ENCODE measurements at regions of chr17 and their contacts with region 1.

Region 1: GRCh38 chr17:58200017-58200633 is 7.6 kb downstream of the EPX start:
- DNase-seq: peak; percentile 64
- ATAC-seq: peak; percentile 70
- H3K4me3 ChIP-seq: no peak overlapping the region
- H3K4me3 Mint-ChIP-seq: no peak overlapping the region
- H3K27ac ChIP-seq: no peak overlapping the region
- H3K27ac Mint-ChIP-seq: no peak overlapping the region
- H3K4me1 ChIP-seq: peaks cover 0 to 5% of the 10 kb centered on the region in 2 donors
- H3K4me1 Mint-ChIP-seq: peaks cover 3% of the 10 kb centered on the region
- H3K27me3 ChIP-seq: peaks cover 0 to 2% (median 0%) of the 10 kb centered on the region in 4 experiments
- H3K27me3 Mint-ChIP-seq: peaks cover 33% of the 10 kb centered on the region
- CTCF ChIP-seq: peak; percentile 77

Region 2: GRCh38 chr17:58210922-58211321 is 10.8 kb after region 1 on chr17:
- CTCF ChIA-PET with region 1: interaction called, 14 read pairs
- POLR2A ChIA-PET with region 1: no interaction called
- intact Hi-C with region 1: no loop called
- DNase-seq: no peak
- ATAC-seq: no peak
- H3K4me3 ChIP-seq: no peak overlapping the region
- H3K4me3 Mint-ChIP-seq: no peak overlapping the region
- H3K27ac ChIP-seq: no peak overlapping the region
- H3K27ac Mint-ChIP-seq: no peak overlapping the region
- H3K4me1 ChIP-seq: no peaks in the 10 kb centered on the region
- H3K4me1 Mint-ChIP-seq: peaks cover 1% of the 10 kb centered on the region
- H3K27me3 ChIP-seq: no peaks in the 10 kb centered on the region
- H3K27me3 Mint-ChIP-seq: no peaks in the 10 kb centered on the region
- CTCF ChIP-seq: no peak

Region 3: GRCh38 chr17:58219001-58219788 is 19.1 kb after region 1 on chr17 and contains the start of gene MKS1:
- CTCF ChIA-PET with region 1: interaction called, 14 read pairs
- POLR2A ChIA-PET with region 1: no interaction called
- intact Hi-C with region 1: no loop called
- DNase-seq: peak; percentile 95
- ATAC-seq: peak; percentile 97
- H3K4me3 ChIP-seq: peak within 1 kb of the TSS; percentile 38 to 84 (median 68)
- H3K4me3 Mint-ChIP-seq: peak within 1 kb of the TSS; percentile 94
- H3K27ac ChIP-seq: peak within 1 kb of the TSS; percentile 70 to 86
- H3K27ac Mint-ChIP-seq: peak within 1 kb of the TSS; percentile 83
- H3K4me1 ChIP-seq: peaks cover 10 to 19% of the 10 kb centered on the region in 2 donors
- H3K4me1 Mint-ChIP-seq: peaks cover 34% of the 10 kb centered on the region
- H3K27me3 ChIP-seq: no peaks in the 10 kb centered on the region
- H3K27me3 Mint-ChIP-seq: peaks cover 2% of the 10 kb centered on the region
- CTCF ChIP-seq: peak; percentile 75
- total RNA-seq, gene MKS1: 16.3 and 19.6 TPM in 2 replicates

Measured in B cell (primary cell).